Activated naive CD4-positive, alpha-beta T cell treated with anti-CD3 and anti-CD28 coated beads for 36 hours (primary cell): ENCODE measurements at regions of chr3 and their contacts with region 1.

Region 1: DNA sequence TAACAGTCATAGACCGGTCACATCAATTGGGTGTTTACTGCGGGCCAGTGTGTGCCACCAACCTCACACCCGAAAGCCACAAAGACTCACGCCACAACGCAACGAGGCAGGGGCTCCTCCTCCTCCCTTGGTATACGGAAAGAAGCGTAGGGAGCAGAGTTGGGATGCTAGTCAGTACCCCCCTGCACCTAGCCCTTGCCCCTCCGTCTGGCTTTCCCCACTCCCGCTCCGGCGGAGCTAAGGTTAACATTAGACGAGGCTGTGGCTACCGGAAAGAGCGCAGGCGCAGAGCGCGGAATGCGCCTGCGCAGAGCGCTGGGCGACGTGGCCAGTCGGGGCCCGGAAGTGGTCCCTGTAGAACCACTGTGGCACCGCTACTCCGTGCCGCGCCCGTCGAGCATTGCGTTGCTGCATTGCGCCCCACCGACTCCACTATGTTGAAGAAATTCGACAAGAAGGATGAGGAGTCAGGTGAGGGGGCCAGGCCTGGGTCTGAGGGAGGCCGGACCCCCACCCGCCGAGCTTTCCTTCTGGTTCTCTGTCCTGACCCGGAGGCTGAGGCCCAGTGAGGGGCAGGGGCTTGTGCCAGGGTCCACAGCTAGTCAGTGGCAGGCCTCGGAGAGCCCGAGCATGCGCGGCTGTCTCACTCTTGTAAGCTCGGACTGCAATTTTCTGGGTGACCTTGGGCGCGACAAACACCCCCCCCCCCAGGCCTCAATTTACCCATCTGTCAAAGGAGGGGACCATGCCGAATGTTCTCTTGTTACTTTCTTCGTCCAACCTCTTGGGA is at the start of gene COPG1:
- DNase-seq: peak; percentile 86
- H3K4me3 Mint-ChIP-seq: peak within 1 kb of the TSS; percentile 95
- H3K27ac Mint-ChIP-seq: peak within 1 kb of the TSS; percentile 89
- H3K4me1 Mint-ChIP-seq: peaks cover 33% of the 10 kb centered on the region
- H3K27me3 Mint-ChIP-seq: no peaks in the 10 kb centered on the region
- total RNA-seq, gene COPG1: 125 to 128 TPM

Region 2: GRCh38 chr3:129003578-129004160 is 245.8 kb before region 1 on chr3:
- CTCF ChIA-PET with region 1: interaction called, 6 read pairs
- intact Hi-C with region 1: loop called (anchors 1 kb)
- DNase-seq: peak; percentile 69
- H3K4me3 Mint-ChIP-seq: peak overlapping the region; percentile 53
- H3K27ac Mint-ChIP-seq: no peak overlapping the region
- H3K4me1 Mint-ChIP-seq: peaks cover 36% of the 10 kb centered on the region
- H3K27me3 Mint-ChIP-seq: peaks cover 21% of the 10 kb centered on the region

Region 3: DNA sequence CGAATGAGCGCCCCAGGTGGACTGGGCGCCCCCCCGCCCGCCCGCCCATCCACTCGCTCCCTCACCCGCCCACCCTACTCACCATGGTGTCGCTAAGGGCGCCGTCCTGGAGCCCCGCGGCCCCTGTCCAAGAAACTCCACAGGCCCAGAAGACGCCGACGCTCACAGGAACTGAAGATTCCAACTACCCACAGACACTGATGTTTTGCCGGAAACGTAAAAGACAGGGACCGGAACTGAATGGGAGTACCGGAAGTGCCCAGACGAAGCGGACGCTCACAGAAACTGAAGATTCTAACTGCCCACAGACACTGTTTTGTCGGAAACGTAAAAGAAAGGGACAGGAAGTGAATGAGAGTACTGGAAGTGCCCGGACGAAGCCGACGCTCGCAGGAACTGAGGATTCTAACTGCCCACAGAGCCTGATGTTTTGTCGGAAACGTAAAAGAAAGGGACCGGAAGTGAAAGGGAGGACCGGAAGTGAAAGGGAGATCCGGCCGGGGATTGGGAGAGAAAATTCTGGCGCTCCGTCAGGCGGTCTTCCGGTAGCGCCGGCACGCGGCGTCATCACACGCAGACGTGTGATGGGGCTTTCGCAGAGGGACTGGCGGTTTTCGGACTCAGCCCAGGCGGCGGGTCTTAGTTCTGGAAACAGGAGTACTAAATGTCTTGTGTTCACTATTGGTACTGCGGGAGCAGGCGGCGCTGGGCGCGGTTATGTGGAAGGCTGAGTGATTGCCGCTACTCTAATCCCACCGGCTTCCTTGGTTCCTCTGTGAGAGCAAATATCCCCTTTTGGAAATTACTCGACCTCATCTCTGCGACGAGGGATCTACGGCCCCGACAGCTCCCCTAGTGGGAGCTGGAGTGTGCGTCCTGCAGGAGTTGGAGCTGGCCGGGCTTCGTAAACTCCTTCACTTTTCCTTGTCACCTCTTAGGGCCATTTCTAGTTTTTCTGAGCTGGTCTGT is 88.3 kb before region 1 on chr3 and contains the start of gene ISY1:
- CTCF ChIA-PET with region 1: interaction called, 54 read pairs
- intact Hi-C with region 1: loop called (anchors 1 kb)
- DNase-seq: peak; percentile 91
- H3K4me3 Mint-ChIP-seq: peak within 1 kb of the TSS; percentile 87
- H3K27ac Mint-ChIP-seq: peak within 1 kb of the TSS; percentile 99
- H3K4me1 Mint-ChIP-seq: peaks cover 31% of the 10 kb centered on the region
- H3K27me3 Mint-ChIP-seq: no peaks in the 10 kb centered on the region
- total RNA-seq, gene ISY1: 56.8 to 65.4 TPM

Region 4: GRCh38 chr3:129224984-129225393 is 24.5 kb before region 1 on chr3:
- CTCF ChIA-PET with region 1: interaction called, 11 read pairs
- intact Hi-C with region 1: no loop called
- DNase-seq: peak; percentile 44
- H3K4me3 Mint-ChIP-seq: peak overlapping the region; percentile 36
- H3K27ac Mint-ChIP-seq: peak overlapping the region; percentile 15
- H3K4me1 Mint-ChIP-seq: peaks cover 16% of the 10 kb centered on the region
- H3K27me3 Mint-ChIP-seq: no peaks in the 10 kb centered on the region

Region 5: GRCh38 chr3:129316131-129317013 is 66.9 kb after region 1 on chr3:
- CTCF ChIA-PET with region 1: interaction called, 6 read pairs
- intact Hi-C with region 1: loop called (anchors 1 kb)
- DNase-seq: peak; percentile 87
- H3K4me3 Mint-ChIP-seq: peak overlapping the region; percentile 96
- H3K27ac Mint-ChIP-seq: peak overlapping the region; percentile 85
- H3K4me1 Mint-ChIP-seq: peaks cover 14% of the 10 kb centered on the region
- H3K27me3 Mint-ChIP-seq: no peaks in the 10 kb centered on the region

Region 6: DNA sequence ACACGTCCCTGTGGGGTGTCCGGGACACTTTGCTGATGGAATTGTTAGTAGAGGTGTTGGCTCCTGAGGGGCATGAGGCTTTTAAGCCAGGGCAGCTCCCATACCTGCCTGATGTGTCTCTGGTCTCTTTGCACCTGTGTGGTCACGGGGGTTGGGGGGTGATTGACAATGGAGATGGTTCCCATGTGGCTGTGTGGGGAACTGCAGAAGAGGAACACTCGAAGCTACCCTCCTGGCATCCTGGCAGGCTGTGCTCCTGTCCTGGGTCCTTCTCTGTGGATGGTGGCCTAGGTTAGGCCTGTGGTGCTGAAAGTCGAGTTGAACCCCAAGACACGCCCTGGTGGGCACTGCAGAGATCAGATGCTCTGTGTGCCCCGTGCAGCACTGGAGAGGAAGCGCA is 102.6 kb after region 1 on chr3:
- CTCF ChIA-PET with region 1: no interaction called
- intact Hi-C with region 1: no loop called
- DNase-seq: no peak
- H3K4me3 Mint-ChIP-seq: no peak overlapping the region
- H3K27ac Mint-ChIP-seq: no peak overlapping the region
- H3K4me1 Mint-ChIP-seq: peaks cover under 1% of the 10 kb centered on the region
- H3K27me3 Mint-ChIP-seq: no peaks in the 10 kb centered on the region

Region 7: GRCh38 chr3:129503471-129504291 is 254.2 kb after region 1 on chr3:
- CTCF ChIA-PET with region 1: no interaction called
- intact Hi-C with region 1: no loop called
- DNase-seq: no peak
- H3K4me3 Mint-ChIP-seq: no peak overlapping the region
- H3K27ac Mint-ChIP-seq: no peak overlapping the region
- H3K4me1 Mint-ChIP-seq: no peaks in the 10 kb centered on the region
- H3K27me3 Mint-ChIP-seq: no peaks in the 10 kb centered on the region